AG04449 (cell line): ENCODE measurements at regions of chr10 and their contacts with region 1.

Region 1: DNA sequence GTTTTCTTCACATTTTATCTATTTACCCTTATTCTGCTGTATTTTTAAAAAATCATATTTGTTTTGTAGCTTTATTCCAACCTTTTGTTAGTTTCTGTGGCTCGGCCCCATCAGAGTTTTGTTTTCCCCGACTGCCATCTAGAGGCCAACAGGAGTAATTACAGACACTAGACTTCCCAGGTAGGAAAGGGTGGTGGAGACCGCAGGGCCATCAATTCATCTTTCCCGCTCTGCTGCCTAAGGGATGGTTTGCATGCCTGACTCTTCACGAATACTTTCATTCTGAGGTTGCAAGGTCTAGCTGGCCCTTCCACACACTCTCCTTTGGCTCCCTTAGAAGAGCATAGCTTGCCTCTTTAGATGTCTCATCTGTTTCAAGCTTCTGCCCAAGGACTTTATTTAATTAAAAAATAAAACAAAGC is 38.3 kb downstream of the LYZL2 start:
- DNase-seq: no peak
- H3K4me3 ChIP-seq: no peak overlapping the region
- CTCF ChIP-seq: peak; percentile 67

Region 2: DNA sequence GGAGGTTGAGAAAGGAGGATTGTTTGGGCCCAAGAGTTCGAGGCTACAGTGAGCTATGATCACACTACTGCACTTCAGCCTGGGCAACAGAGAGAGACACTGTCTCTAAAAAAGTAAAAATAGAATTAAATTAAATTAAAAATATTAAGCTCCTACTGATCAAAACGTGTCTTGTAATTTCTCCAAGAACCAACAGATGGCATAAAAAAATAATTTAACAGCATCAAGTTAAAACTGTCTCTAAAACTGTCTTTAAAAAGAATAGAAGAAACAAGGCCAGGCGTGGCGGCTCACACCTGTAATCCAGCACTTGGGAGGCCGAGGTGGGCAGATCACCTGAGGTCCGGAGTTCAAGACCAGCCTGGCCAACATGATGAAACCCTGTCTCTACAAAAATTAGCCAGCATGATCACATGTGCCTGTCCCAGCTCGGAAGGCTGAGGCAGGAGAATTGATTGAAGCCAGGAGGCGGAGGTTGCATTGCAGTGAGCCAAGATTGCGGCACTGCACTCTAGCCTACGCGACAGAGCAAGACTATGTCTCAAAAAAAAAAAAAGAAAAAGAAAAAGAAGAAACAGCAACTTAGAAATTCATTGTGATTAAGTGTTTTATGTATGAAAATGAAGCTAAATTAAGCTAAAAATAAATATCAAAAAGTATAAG is 266.7 kb before region 1 on chr10:
- CTCF ChIA-PET with region 1: interaction called, 10 read pairs
- POLR2A ChIA-PET with region 1: no interaction called
- DNase-seq: no peak
- H3K4me3 ChIP-seq: no peak overlapping the region
- CTCF ChIP-seq: no peak

Region 3: GRCh38 chr10:30374353-30374752 is 216.9 kb before region 1 on chr10:
- CTCF ChIA-PET with region 1: interaction called, 13 read pairs
- POLR2A ChIA-PET with region 1: no interaction called
- DNase-seq: no peak
- H3K4me3 ChIP-seq: no peak overlapping the region
- CTCF ChIP-seq: no peak

Region 4: GRCh38 chr10:30413996-30414576 is 177.2 kb before region 1 on chr10:
- CTCF ChIA-PET with region 1: interaction called, 37 read pairs
- POLR2A ChIA-PET with region 1: no interaction called
- DNase-seq: no peak
- H3K4me3 ChIP-seq: no peak overlapping the region
- CTCF ChIP-seq: peak; percentile 76

Region 5: DNA sequence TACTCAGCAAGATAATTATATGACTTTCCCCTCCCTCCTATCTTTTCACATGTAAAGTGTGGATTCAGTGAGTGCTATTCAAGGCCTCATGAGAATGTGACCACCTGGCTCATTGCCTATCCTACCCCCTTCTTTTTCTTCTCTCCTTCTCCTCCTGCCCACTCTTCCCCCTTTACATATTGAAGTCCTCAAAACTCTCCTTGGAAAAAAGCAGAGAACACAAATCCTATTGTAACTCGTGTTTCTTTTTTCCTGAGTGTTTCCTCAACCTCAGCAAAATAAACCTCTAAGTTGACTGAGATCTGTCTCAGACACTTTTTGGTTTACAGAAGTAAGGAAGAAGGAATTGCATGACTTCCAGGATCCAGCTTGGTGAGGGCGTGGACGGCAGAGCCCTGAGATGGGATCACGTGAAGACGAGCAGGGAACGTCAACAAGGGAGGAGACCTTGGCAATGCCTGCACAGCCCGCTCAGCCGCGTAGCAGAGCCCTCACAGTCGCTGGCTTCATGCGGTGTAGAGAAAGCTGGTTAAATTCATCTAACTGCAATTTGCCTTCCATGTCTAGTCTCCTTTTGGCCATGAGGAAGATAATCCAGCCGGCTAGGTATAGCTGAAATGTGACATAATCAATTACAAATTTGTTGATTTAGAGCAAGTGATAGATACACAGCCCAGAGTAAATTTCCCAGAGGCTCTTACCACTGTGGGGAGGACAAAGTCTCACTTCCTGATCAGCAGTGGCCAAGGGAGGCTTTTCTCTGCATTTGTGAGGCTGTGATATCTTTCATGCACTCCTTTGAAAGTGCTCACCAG is 37.4 kb before region 1 on chr10:
- CTCF ChIA-PET with region 1: interaction called, 10 read pairs
- POLR2A ChIA-PET with region 1: no interaction called
- DNase-seq: no peak
- H3K4me3 ChIP-seq: no peak overlapping the region
- CTCF ChIP-seq: no peak

Region 6: GRCh38 chr10:30792025-30792424 is 200.8 kb after region 1 on chr10:
- CTCF ChIA-PET with region 1: no interaction called
- POLR2A ChIA-PET with region 1: no interaction called
- DNase-seq: no peak
- H3K4me3 ChIP-seq: no peak overlapping the region
- CTCF ChIP-seq: no peak